PC-3 (cell line): ENCODE measurements at regions of chr2 and their contacts with region 1.

Region 1: DNA sequence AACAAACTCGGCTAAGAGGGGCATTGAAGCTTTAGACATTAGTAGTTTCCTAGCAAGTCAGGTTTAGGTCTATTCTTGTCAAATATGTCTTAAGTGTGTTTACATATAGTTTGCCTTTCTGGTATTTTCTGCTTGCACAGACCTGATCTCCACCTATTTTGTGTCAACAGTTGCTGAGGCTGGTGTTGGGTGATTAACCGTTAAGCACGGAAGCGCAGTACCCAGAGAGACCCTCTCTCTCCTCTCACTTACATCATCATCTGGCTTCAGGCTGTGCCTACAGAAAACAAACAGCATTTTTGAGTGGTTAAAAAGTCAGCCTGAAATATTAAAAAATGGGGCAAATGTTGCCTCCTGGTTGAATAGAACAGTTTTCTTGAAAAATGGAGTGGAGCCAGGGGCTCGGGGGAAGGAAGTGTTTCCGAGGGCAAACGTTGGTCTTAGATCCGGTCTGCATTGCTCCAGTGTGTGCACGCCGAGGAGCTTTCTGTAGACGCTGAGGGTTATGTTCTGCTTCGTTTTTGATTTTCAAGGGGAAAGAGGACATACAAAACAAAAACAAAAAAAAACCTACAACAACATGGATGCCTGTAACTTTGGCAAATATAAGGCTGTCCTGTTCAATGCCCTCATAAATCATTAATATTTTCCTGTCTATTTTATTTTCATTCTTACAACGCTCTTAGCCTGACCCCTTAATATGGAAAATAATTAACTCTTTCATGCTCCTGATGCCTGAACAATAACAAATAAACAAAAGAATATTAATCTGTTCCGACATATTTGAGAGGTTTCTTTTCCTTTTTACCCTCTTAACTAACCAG is 120.8 kb downstream of the MEIS1 start:
- DNase-seq: no peak
- ATAC-seq: no peak
- H3K4me3 ChIP-seq: no peak overlapping the region
- H3K27ac ChIP-seq: no peak overlapping the region
- H3K4me1 ChIP-seq: peaks cover 12% of the 10 kb centered on the region
- H3K27me3 ChIP-seq: no peaks in the 10 kb centered on the region
- CTCF ChIP-seq: no peak

Region 2: DNA sequence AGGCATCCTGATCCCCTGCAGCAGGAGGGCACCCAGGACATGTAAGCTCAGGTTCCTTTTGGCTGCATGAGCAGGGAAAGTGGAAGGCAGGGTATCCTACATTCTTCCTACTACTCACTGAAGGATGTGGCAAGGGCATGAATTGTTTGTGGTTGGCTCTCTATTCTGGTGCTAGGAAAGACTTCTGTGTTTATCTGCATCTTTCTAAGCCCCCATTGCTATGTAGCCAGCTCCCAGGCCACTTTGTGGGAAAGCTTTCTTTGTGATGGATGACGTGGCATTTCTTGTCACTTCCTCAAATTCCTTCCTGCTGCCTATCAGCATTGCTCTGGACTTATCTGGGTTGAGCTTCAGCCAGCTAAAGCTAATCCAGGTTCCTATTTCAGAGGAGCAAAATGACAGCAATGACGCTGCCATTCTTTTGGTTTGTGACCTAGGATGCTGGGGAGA is 74.6 kb before region 1 on chr2:
- CTCF ChIA-PET with region 1: no interaction called
- POLR2A ChIA-PET with region 1: no interaction called
- intact Hi-C with region 1: no loop called
- DNase-seq: no peak
- ATAC-seq: no peak
- H3K4me3 ChIP-seq: no peak overlapping the region
- H3K27ac ChIP-seq: no peak overlapping the region
- H3K4me1 ChIP-seq: no peaks in the 10 kb centered on the region
- H3K27me3 ChIP-seq: no peaks in the 10 kb centered on the region
- CTCF ChIP-seq: no peak

Region 3: GRCh38 chr2:66495788-66496640 is 59.7 kb before region 1 on chr2:
- CTCF ChIA-PET with region 1: no interaction called
- POLR2A ChIA-PET with region 1: no interaction called
- intact Hi-C with region 1: loop called (anchors 10 kb)
- DNase-seq: peak; percentile 84
- ATAC-seq: peak; percentile 87
- H3K4me3 ChIP-seq: peak overlapping the region; percentile 38
- H3K27ac ChIP-seq: peak overlapping the region; percentile 92
- H3K4me1 ChIP-seq: peaks cover 41% of the 10 kb centered on the region
- H3K27me3 ChIP-seq: no peaks in the 10 kb centered on the region
- CTCF ChIP-seq: peak; percentile 48; the same call in 1 of the 2 replicates

Region 4: GRCh38 chr2:66508484-66509071 is 47.1 kb before region 1 on chr2:
- CTCF ChIA-PET with region 1: no interaction called
- POLR2A ChIA-PET with region 1: no interaction called
- intact Hi-C with region 1: no loop called
- DNase-seq: no peak
- ATAC-seq: no peak
- H3K4me3 ChIP-seq: no peak overlapping the region
- H3K27ac ChIP-seq: no peak overlapping the region
- H3K4me1 ChIP-seq: peaks cover 9% of the 10 kb centered on the region
- H3K27me3 ChIP-seq: no peaks in the 10 kb centered on the region
- CTCF ChIP-seq: no peak